Activated naive CD4-positive, alpha-beta T cell treated with anti-CD3 and anti-CD28 coated beads for 36 hours (primary cell): ENCODE measurements at regions of chr2 and their contacts with region 1.

Region 1: GRCh38 chr2:64330281-64331113 is 123.5 kb upstream of the LGALSL start:
- DNase-seq: peak; percentile 89
- H3K4me3 Mint-ChIP-seq: no peak overlapping the region
- H3K27ac Mint-ChIP-seq: no peak overlapping the region
- H3K4me1 Mint-ChIP-seq: peaks cover 41% of the 10 kb centered on the region
- H3K27me3 Mint-ChIP-seq: no peaks in the 10 kb centered on the region

Region 2: DNA sequence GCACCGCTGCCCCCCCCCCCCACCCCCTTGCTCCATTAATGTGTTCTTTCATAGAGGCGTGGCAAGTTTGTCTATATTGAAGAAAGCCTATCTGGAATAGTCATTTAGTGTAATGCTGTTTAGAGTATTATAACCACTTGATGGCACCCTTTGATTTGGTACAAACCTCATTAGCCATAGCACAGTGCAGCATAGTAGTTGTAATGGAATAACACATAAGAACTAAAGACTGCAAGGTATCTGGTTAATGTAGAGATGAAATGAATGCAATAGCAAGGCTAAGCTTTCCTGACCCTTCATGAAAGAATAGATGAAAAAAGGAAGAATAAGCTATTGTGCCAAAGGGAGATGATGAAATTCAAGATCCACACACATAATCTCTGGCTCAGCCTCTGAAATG is 1543.1 kb before region 1 on chr2:
- CTCF ChIA-PET with region 1: no interaction called
- intact Hi-C with region 1: no loop called
- DNase-seq: no peak
- H3K4me3 Mint-ChIP-seq: no peak overlapping the region
- H3K27ac Mint-ChIP-seq: no peak overlapping the region
- H3K4me1 Mint-ChIP-seq: peaks cover 15% of the 10 kb centered on the region
- H3K27me3 Mint-ChIP-seq: no peaks in the 10 kb centered on the region

Region 3: GRCh38 chr2:63790913-63791312 is 539.6 kb before region 1 on chr2:
- CTCF ChIA-PET with region 1: no interaction called
- intact Hi-C with region 1: no loop called
- DNase-seq: no peak
- H3K4me3 Mint-ChIP-seq: no peak overlapping the region
- H3K27ac Mint-ChIP-seq: no peak overlapping the region
- H3K4me1 Mint-ChIP-seq: peaks cover 17% of the 10 kb centered on the region
- H3K27me3 Mint-ChIP-seq: no peaks in the 10 kb centered on the region

Region 4: DNA sequence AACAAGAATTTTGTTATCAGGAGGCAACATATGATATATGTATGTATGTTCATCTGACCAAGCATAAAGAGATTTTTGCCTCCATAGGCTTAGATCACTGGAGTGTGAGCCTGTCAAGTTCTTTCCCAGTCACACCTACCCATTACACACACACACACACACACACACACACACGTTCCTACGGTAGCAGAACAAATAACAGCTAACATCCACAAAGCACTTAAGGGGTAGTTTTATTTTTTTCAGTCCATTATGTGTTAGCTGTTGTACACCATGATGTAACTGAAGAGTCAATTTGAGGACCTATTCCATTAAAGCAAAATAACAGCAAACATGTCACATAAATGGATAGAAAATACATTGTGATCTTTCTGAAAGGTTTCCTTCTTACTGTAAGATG is 449.3 kb before region 1 on chr2:
- CTCF ChIA-PET with region 1: interaction called, 4 read pairs
- intact Hi-C with region 1: loop called (anchors 5 kb)
- DNase-seq: no peak
- H3K4me3 Mint-ChIP-seq: no peak overlapping the region
- H3K27ac Mint-ChIP-seq: no peak overlapping the region
- H3K4me1 Mint-ChIP-seq: peaks cover 31% of the 10 kb centered on the region
- H3K27me3 Mint-ChIP-seq: no peaks in the 10 kb centered on the region

Region 5: GRCh38 chr2:64101141-64101591 is 229.3 kb before region 1 on chr2:
- CTCF ChIA-PET with region 1: interaction called, 9 read pairs
- intact Hi-C with region 1: loop called (anchors 1 kb)
- DNase-seq: no peak
- H3K4me3 Mint-ChIP-seq: no peak overlapping the region
- H3K27ac Mint-ChIP-seq: peak overlapping the region; percentile 76
- H3K4me1 Mint-ChIP-seq: peaks cover 51% of the 10 kb centered on the region
- H3K27me3 Mint-ChIP-seq: no peaks in the 10 kb centered on the region

Region 6: DNA sequence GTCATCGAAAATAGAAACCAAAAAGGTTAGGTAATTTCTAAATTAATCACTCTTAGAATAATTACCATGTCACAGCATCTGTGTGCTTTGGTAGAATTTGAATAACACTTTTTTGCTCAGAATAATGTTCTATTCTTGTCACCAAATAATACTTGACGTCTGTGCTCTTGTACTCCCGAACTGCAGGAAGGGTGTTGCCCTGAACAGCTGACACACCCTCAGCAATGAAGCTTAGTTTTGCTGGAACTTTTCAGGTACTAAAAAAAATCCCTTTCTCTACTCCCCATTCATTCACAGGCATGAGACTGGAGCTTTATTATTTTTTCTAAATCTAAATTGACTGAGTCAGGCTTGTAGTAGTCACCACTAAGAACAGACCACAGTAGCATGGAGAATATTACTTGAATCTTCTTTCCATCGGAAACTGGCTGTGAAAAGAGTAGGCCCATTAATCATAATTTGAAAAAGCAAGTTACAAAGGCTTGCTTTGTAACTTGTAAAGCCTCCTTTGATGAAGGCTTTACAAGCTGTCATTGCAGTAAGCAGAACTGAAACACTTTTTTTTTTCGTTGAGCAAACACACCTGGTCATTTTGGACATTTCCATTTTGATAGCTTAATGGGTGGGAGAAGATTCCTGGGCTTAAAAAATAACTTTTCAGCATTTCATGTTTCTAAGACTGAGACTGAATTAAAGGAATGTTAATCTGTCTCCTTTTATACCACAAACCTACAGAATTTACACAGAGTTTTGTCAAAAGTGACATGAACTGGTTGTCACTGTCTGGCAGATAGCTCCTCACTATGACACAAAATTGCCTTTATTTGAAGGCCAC is 116.0 kb before region 1 on chr2:
- CTCF ChIA-PET with region 1: interaction called, 41 read pairs
- intact Hi-C with region 1: loop called (anchors 1 kb)
- DNase-seq: peak; percentile 62
- H3K4me3 Mint-ChIP-seq: peak overlapping the region; percentile 61
- H3K27ac Mint-ChIP-seq: peak overlapping the region; percentile 96
- H3K4me1 Mint-ChIP-seq: peaks cover 63% of the 10 kb centered on the region
- H3K27me3 Mint-ChIP-seq: no peaks in the 10 kb centered on the region

Region 7: DNA sequence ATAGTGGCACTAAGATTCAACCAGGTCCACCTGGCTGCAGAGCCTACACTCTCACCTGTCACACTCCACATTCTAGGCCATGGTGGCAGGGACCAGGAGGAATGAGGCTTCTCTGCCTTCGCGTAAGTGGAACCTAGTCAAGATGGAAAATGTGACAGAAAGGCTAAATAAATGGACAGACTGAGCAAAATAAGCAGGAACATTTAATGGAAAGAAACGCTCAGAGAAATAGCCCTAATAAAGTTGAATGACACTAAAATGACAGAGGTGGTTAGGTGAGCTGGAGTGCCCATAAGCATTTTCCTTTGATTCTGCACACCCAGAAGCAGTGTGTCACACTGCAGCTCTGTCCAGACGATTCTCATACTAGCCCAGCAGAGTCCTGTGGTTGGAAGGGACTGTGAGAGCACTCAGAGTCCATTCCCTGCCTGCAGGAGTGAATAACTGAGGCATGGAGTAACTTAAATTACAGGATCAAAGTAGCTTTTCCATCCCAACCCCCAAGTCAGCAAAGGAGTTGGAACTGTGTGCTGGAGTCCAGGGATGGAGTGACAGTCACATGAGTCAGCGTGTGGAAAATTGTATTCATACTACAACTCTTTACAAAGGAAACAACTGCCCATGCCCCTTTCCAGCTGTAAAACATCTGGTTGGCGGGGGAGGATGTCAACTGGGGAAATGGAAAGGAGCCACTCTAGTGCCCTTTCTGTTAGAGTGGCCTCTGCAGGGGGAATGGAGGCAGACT is 18.1 kb after region 1 on chr2:
- CTCF ChIA-PET with region 1: interaction called, 12 read pairs
- intact Hi-C with region 1: no loop called
- DNase-seq: no peak
- H3K4me3 Mint-ChIP-seq: no peak overlapping the region
- H3K27ac Mint-ChIP-seq: no peak overlapping the region
- H3K4me1 Mint-ChIP-seq: no peaks in the 10 kb centered on the region
- H3K27me3 Mint-ChIP-seq: no peaks in the 10 kb centered on the region

Region 8: GRCh38 chr2:64470766-64471295 is 140.3 kb after region 1 on chr2:
- CTCF ChIA-PET with region 1: no interaction called
- intact Hi-C with region 1: no loop called
- DNase-seq: no peak
- H3K4me3 Mint-ChIP-seq: no peak overlapping the region
- H3K27ac Mint-ChIP-seq: no peak overlapping the region
- H3K4me1 Mint-ChIP-seq: no peaks in the 10 kb centered on the region
- H3K27me3 Mint-ChIP-seq: no peaks in the 10 kb centered on the region

Region 9: DNA sequence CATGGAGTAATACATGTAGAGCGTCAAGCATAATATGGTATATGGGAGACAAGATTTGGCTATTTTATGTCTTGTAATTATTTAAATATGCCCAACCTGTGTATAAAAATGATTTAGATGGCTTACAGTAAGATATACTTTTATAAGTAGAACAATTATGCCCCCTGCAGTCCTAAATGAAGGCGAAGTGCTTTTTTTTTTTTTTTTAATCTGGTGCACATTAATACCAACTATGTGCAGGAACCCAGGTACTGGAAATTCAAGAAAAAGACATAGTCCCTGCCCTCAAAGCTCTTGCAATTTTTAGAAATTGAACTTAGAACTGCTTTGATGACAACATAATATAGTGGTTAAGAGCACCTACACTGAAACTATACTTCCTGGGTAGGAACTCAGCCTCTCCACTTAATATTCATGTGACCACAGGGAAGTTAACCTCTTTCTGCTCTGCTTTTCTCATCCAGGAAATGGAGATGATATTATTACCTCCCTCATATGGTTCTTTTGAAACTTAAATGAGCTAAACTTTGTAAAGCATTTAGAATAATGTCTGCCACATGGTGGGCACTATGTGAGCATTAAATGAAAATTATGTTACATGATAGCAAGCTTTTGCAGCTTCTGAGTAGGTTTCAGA is 231.8 kb after region 1 on chr2:
- CTCF ChIA-PET with region 1: interaction called, 21 read pairs
- intact Hi-C with region 1: loop called (anchors 1 kb)
- DNase-seq: no peak
- H3K4me3 Mint-ChIP-seq: no peak overlapping the region
- H3K27ac Mint-ChIP-seq: no peak overlapping the region
- H3K4me1 Mint-ChIP-seq: peaks cover 43% of the 10 kb centered on the region
- H3K27me3 Mint-ChIP-seq: no peaks in the 10 kb centered on the region